ENCODE measurements at regions of chr7 and their contacts with region 1.

Region 1: GRCh38 chr7:4144811-4145510 is 537.1 kb upstream of the FOXK1 start:
- DNase-seq: peak; percentile 97
- H3K4me3 ChIP-seq: peak overlapping the region; percentile 7 to 22; a peak in 2 of 4 replicates
- H3K27ac ChIP-seq: peak overlapping the region in 1 of 2 experiments; percentile 93; a peak in 2 of 4 replicates
- H3K4me1 ChIP-seq: peaks cover 0 to 53% of the 10 kb centered on the region in 2 experiments; a peak in 1 of 4 replicates
- H3K27me3 ChIP-seq: no peaks in the 10 kb centered on the region
- CTCF ChIP-seq: no peak
- EP300 ChIP-seq: peak in 1 of 2 experiments; percentile 95; a peak in 2 of 4 replicates
- RAD21 ChIP-seq: no peak; the same call in 1 of the 2 replicates

Region 2: GRCh38 chr7:4006687-4007086 is 138.3 kb before region 1 on chr7:
- CTCF ChIA-PET with region 1: interaction called, 11 read pairs
- POLR2A ChIA-PET with region 1: interaction called, 3 read pairs
- DNase-seq: peak; percentile 89
- H3K4me3 ChIP-seq: no peak overlapping the region
- H3K27ac ChIP-seq: peak overlapping the region in 1 of 2 experiments; percentile 24; a peak in 2 of 4 replicates
- H3K4me1 ChIP-seq: peaks cover 0 to 11% of the 10 kb centered on the region in 2 experiments; a peak in 2 of 4 replicates
- H3K27me3 ChIP-seq: no peaks in the 10 kb centered on the region
- CTCF ChIP-seq: no peak
- EP300 ChIP-seq: peak in 1 of 2 experiments; percentile 86; a peak in 2 of 4 replicates
- RAD21 ChIP-seq: peak; percentile 36

Region 3: GRCh38 chr7:4103352-4104091 is 41.4 kb before region 1 on chr7:
- CTCF ChIA-PET with region 1: interaction called, 18 read pairs
- POLR2A ChIA-PET with region 1: interaction called, 5 read pairs
- DNase-seq: peak; percentile 62
- H3K4me3 ChIP-seq: no peak overlapping the region
- H3K27ac ChIP-seq: no peak overlapping the region
- H3K4me1 ChIP-seq: peaks cover 0 to 6% of the 10 kb centered on the region in 2 experiments; a peak in 1 of 4 replicates
- H3K27me3 ChIP-seq: no peaks in the 10 kb centered on the region
- CTCF ChIP-seq: no peak; the same call in 1 of the 2 replicates
- EP300 ChIP-seq: no peak
- RAD21 ChIP-seq: peak; percentile 57

Region 4: DNA sequence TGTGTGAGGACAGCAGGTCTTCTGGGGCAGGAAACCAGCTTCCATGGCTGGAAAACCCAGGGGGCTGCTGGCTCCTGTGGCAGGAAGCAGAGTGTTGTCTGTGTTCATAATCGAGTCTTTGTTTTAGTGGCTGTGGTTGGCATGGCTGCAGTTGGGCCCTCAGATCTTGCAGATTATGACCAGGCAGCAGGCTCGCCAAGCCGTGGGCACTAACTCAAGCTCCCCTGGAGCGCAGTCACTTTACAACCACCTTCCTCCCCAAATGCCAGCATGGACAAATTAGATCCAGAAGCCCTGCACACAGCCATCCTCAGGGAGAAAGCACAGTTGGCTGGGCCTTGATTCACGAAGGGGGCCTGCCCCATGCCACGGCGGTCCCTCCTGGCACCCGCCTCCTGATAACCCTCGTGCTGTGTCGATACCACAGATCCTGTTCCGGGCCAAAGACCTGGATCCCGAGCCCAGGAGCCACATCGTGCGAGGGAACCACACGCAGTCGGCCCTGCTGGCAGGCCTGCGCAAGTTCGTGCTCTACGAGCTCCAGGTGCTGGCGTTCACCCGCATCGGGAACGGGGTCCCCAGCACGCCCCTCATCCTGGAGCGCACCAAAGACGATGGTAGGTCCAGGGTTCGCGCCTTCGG is 15.4 kb before region 1 on chr7:
- CTCF ChIA-PET with region 1: interaction called, 5 read pairs
- POLR2A ChIA-PET with region 1: interaction called, 15 read pairs
- DNase-seq: peak; percentile 75
- H3K4me3 ChIP-seq: no peak overlapping the region
- H3K27ac ChIP-seq: peak overlapping the region in 1 of 2 experiments; percentile 85; a peak in 2 of 4 replicates
- H3K4me1 ChIP-seq: peaks cover 0 to 24% of the 10 kb centered on the region in 2 experiments; a peak in 1 of 4 replicates
- H3K27me3 ChIP-seq: no peaks in the 10 kb centered on the region
- CTCF ChIP-seq: no peak
- EP300 ChIP-seq: peak in 1 of 2 experiments; percentile 55; a peak in 1 of 4 replicates
- RAD21 ChIP-seq: 0 out of 2 replicates have a peak, but pooled peaks have one; percentile 1

Measured in SK-N-SH (cell line).